MCF 10A (cell line): ENCODE measurements at regions of chr2 and their contacts with region 1.

Region 1: DNA sequence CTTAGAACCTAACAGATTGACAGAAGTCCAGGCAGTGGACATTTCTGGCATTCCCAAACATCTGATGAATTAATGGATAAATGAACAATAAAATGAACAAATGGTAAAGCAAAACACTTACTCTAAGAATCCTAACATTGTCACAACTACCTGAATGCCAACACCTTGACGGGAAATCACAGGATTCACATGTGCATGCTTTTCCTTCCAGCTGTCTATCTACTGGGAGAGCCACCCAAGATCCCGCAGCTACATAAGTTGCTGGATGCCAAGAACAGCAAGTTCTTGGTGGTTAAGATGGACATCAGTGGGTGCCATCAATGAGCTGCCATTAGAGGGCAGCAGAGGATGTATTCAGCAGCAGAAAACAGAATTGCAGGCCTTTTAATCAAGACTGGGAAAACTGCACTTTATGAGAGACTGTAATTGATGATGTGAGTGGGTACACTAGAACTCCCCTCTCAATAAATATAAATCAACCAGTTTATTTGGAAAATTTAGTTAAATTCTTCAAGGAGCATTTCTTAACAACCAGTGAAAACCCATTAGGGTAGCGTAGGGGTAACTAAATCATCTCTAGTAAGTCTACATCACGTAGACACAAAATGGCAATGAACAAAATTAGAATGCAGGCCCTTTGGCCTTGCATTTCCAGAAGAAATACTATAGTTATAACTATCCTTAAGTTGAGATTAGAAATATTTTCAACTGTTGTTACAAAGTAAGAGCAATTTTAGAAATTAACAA is 45.6 kb downstream of the SESTD1 start:
- DNase-seq: peak; percentile 83
- H3K4me3 Mint-ChIP-seq: no peak overlapping the region
- H3K27ac Mint-ChIP-seq: no peak overlapping the region
- H3K4me1 Mint-ChIP-seq: peaks cover 25% of the 10 kb centered on the region
- H3K27me3 Mint-ChIP-seq: no peaks in the 10 kb centered on the region
- CTCF ChIP-seq: peak; percentile 69

Region 2: GRCh38 chr2:179165356-179166000 is 53.5 kb before region 1 on chr2:
- CTCF ChIA-PET with region 1: no interaction called
- POLR2A ChIA-PET with region 1: no interaction called
- intact Hi-C with region 1: no loop called
- DNase-seq: no peak
- H3K4me3 Mint-ChIP-seq: no peak overlapping the region
- H3K27ac Mint-ChIP-seq: no peak overlapping the region
- H3K4me1 Mint-ChIP-seq: no peaks in the 10 kb centered on the region
- H3K27me3 Mint-ChIP-seq: no peaks in the 10 kb centered on the region
- CTCF ChIP-seq: no peak

Region 3: DNA sequence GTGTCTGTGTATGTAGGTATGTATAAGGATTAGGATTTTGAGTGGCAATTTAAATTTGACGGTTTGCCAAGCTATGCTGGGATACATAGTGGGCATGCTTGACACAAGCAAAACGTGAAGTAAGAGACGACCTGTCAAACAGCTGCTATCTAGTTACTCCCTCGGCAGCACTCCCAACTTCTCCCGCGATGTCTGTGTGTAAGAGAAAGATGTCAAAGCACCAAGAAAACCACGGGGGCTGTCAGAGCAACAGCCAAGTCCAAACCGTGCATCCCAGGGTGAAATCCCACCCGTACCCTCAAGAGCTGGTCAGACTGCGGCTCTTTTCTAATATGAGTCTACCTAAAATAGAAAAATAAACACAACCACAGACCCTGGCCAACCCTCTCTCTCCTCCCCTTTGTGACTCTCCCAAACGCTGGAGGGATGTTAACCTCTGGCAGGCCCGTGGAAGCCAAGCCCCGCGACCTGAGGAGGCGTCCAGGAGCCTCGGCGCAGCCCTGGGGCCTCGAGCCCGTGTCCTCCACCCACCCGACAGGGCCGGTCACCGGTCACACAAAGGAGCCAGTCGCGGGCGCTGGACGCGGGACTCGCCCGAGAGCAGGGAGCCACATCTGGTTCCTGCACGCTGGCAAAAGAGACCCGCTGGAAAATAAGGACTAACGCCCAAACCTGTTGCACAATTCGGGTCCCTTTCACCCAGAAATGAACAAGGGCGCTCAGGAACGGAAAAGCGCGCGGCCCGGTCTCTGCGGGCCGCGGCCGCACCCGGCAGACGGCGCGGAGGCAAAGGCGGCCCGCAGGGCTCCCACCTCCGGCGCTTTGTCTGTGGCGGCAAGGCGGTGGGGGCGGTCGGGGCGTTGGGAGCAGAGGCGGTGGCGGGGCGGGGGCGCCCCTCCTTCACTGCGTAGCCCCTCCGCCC is 44.7 kb after region 1 on chr2:
- CTCF ChIA-PET with region 1: interaction called, 3 read pairs
- POLR2A ChIA-PET with region 1: interaction called, 6 read pairs
- intact Hi-C with region 1: loop called (anchors 2 kb)
- DNase-seq: peak; percentile 64
- H3K4me3 Mint-ChIP-seq: peak overlapping the region; percentile 85
- H3K27ac Mint-ChIP-seq: peak overlapping the region; percentile 89
- H3K4me1 Mint-ChIP-seq: peaks cover 29% of the 10 kb centered on the region
- H3K27me3 Mint-ChIP-seq: no peaks in the 10 kb centered on the region
- CTCF ChIP-seq: no peak

Region 4: DNA sequence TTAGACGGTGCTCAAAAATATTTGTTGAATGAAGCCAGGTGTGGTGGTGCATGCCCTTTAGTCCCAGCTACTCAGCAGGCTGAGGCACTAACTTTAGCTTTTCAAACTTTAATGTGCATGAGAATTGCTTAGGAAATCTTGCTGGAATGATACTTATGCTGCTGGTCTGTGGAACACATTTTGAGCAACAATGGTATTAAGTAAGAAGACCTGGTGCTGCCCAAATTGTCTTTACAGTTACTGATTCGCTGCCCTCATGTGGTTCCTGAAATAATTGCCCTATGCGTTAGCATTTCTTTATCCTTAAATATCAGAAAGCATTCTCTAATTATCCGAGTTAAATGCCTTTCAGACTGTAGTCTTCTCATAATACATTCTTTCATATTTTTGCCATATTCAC is 121.6 kb after region 1 on chr2:
- CTCF ChIA-PET with region 1: interaction called, 5 read pairs
- POLR2A ChIA-PET with region 1: interaction called, 3 read pairs
- intact Hi-C with region 1: loop called (anchors 1 kb)
- DNase-seq: peak; percentile 63
- H3K4me3 Mint-ChIP-seq: no peak overlapping the region
- H3K27ac Mint-ChIP-seq: no peak overlapping the region
- H3K4me1 Mint-ChIP-seq: peaks cover 40% of the 10 kb centered on the region
- H3K27me3 Mint-ChIP-seq: no peaks in the 10 kb centered on the region
- CTCF ChIP-seq: peak; percentile 33

Region 5: DNA sequence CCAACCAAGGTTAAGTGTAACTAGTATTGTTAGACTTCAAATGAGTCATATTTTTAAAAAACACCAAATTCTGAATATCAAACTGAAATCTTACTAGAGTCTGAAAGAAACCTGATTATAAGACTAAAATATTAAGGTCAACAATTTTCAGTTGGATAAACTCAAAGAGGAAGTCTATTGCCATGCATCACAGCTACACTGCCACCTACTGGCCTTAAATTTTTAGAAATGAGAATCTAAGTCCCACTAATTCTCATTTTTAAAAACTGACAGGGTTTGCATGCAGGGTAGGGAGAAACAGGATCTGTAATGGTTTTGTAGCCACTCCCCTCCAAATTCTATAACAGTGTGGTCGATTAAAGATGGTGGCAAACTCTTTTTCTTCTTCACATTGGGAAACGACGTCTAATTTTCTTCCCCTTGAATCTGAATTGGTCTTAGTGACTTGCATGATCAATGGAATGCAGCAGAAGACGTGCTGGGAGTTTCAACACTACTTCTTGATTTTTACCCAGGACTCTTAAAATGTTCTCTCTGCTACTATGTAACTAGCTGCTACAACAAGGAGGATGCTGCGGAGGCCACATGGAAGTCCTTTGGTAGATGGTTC is 221.7 kb after region 1 on chr2:
- CTCF ChIA-PET with region 1: interaction called, 7 read pairs
- POLR2A ChIA-PET with region 1: no interaction called
- intact Hi-C with region 1: loop called (anchors 1 kb)
- DNase-seq: peak; percentile 43
- H3K4me3 Mint-ChIP-seq: no peak overlapping the region
- H3K27ac Mint-ChIP-seq: no peak overlapping the region
- H3K4me1 Mint-ChIP-seq: peaks cover 11% of the 10 kb centered on the region
- H3K27me3 Mint-ChIP-seq: no peaks in the 10 kb centered on the region
- CTCF ChIP-seq: peak; percentile 53